Caco-2 (cell line): ENCODE measurements at regions of chr6 and their contacts with region 1.

Region 1: DNA sequence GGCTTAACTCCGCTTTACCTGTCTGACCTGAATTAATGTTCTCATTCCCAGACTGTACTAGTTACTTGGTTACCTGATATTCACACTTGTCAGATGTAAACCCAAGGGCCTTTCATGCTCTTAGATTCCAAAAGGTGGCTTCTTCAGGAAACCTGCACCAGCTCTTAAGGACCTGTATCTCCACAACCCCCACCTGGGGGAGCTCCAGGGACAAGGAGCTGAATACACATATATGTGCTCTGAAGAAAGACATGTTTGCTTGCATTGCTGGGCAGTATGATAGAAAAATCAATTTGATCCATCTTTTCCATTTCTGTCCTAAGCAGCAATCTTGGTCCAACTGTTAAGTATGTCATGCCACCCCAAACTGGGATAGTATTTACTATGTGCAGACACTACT is 64.8 kb upstream of the POU3F2 start:
- DNase-seq: peak; percentile 52 to 66
- H3K4me3 ChIP-seq: no peak overlapping the region
- H3K4me3 Mint-ChIP-seq: no peak overlapping the region
- H3K27ac Mint-ChIP-seq: no peak overlapping the region
- H3K4me1 ChIP-seq: no peaks in the 10 kb centered on the region
- H3K4me1 Mint-ChIP-seq: no peaks in the 10 kb centered on the region
- H3K27me3 ChIP-seq: no peaks in the 10 kb centered on the region
- H3K27me3 Mint-ChIP-seq: peaks cover 13% of the 10 kb centered on the region
- CTCF ChIP-seq: peak; percentile 27 to 68

Region 2: DNA sequence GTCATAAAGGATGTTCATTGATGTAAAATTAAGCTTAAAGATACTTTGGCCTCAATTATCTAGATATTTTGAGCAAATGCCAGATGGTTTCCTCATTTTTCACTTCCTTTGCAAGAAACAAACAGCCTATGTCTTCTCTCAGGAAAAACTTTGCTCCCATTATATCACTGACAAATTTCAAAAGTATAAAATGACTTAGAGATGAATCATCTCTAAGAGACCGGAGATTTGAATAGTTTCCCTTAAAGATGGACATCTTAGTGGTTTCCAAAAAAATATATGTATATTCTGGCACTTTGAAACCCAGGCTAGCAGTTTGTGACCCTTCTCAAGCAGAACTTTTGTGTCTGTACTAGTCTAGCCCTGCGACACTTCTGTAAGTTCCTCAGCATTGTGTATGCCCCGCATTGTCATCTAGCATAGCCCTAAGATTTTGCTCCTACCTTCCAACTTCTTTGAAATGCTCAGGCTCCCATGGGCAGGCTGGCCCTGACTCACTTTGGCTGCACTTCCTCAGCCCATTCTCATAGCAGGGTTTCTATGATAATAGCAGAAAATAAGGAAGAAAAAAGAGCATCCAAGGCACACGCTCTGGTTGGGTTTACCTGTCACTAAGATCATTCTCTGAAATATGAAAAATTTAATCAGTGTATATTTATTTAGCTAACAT is 39.1 kb after region 1 on chr6:
- CTCF ChIA-PET with region 1: no interaction called
- POLR2A ChIA-PET with region 1: no interaction called
- intact Hi-C with region 1: no loop called
- DNase-seq: no peak
- H3K4me3 ChIP-seq: no peak overlapping the region
- H3K4me3 Mint-ChIP-seq: no peak overlapping the region
- H3K27ac Mint-ChIP-seq: no peak overlapping the region
- H3K4me1 ChIP-seq: no peaks in the 10 kb centered on the region
- H3K4me1 Mint-ChIP-seq: no peaks in the 10 kb centered on the region
- H3K27me3 ChIP-seq: no peaks in the 10 kb centered on the region
- H3K27me3 Mint-ChIP-seq: peaks cover 4% of the 10 kb centered on the region
- CTCF ChIP-seq: no peak

Region 3: GRCh38 chr6:98839781-98840361 is 70.3 kb after region 1 on chr6:
- CTCF ChIA-PET with region 1: interaction called, 12 read pairs
- POLR2A ChIA-PET with region 1: no interaction called
- intact Hi-C with region 1: loop called (anchors 1 kb)
- DNase-seq: no peak
- H3K4me3 ChIP-seq: no peak overlapping the region
- H3K4me3 Mint-ChIP-seq: no peak overlapping the region
- H3K27ac Mint-ChIP-seq: no peak overlapping the region
- H3K4me1 ChIP-seq: peaks cover 12% of the 10 kb centered on the region; the same call in 1 of the 2 replicates
- H3K4me1 Mint-ChIP-seq: no peaks in the 10 kb centered on the region
- H3K27me3 ChIP-seq: peaks cover 4% of the 10 kb centered on the region
- H3K27me3 Mint-ChIP-seq: peaks cover 39% of the 10 kb centered on the region
- CTCF ChIP-seq: peak; percentile 27 to 57

Region 4: DNA sequence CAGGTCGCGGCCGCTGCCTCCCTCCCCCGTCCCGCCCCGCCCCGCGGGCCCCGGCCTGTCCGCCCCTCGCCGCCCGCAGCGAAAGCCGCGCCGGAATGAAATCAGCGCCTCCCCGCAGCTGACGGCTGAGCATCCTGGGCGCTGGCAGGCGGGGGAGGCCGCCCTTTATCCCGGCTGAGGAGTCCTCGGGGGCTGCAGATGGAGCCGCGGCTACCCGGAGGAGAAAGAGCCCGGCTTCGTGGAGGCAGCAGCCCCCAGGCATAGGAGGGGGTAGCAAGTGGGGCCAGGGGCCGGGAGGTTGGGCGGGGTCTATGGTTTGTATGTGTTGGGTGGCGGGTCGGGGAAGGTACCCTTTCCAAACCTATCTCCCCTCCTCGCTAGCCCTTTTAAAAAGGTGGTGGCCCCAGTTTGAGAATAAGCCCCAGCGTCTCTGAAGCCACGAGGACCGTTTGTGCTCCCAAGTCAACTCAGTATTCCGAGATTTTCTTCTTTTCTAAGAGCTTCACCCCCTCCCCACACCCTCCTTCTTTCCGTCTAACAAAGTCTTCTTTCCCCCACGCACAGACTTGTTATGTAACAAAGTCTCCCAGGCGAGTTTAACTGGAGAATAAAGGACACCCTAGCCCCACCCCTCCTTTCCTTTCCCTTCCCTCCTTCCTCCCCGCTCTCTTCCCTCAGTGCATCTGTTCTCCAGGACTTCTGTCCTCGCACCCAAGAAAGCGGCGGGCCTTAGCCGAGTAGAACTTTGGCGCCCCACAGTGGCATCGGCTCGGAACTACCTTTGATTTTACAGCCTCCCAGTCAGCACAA is 75.9 kb after region 1 on chr6:
- CTCF ChIA-PET with region 1: interaction called, 10 read pairs
- POLR2A ChIA-PET with region 1: no interaction called
- intact Hi-C with region 1: loop called (anchors 1 kb)
- DNase-seq: peak; percentile 66 to 79
- H3K4me3 ChIP-seq: no peak overlapping the region
- H3K4me3 Mint-ChIP-seq: peak overlapping the region; percentile 56
- H3K27ac Mint-ChIP-seq: no peak overlapping the region
- H3K4me1 ChIP-seq: 0 out of 2 replicates have a peak, but pooled peaks cover 4% of the 10 kb centered on the region
- H3K4me1 Mint-ChIP-seq: no peaks in the 10 kb centered on the region
- H3K27me3 ChIP-seq: no peaks in the 10 kb centered on the region; the same call in 1 of the 2 replicates
- H3K27me3 Mint-ChIP-seq: peaks cover 34% of the 10 kb centered on the region
- CTCF ChIP-seq: peak; percentile 85 to 88

Region 5: DNA sequence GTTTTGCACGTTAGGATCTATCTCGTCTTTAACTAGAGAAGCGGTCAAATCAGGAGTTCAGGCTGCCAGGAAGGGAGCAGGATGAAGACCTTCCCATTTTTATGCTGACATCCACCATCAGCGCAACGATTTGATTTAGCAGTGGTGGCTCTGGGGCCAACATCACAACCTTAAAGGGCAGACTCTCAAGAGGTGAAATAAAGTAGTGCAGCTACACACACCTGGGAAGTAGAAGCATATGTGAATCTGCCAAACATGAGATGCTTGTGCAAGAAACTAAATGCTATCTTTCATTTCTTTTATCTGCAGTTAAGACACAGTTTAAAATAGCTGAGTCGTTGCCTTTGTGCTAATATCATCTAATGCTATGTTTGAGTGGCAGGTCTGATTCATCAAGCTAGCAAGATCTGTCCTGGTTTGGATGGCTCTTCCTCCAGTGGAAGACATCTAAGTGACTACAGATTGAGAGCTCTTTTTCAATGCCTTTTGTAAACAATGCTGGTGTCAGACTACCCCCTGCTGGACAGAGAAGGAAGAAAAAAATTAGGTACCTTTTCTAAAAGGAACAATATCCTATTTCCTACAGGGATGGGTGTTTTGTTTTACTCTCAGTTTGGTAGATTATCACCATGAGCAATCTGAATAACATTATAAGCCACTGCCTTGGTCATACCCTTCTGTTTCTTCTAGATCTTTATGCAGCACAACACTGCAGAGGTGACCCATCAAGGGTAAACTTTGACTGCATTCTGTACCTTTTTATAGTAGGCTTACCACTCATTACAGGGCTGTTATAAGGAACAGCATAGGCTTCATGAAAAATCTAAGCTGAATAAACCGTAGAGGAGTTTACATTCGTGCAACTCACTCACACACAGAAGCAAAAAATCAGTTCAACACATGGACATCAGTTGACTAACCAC is 349.8 kb after region 1 on chr6:
- CTCF ChIA-PET with region 1: interaction called, 13 read pairs
- POLR2A ChIA-PET with region 1: no interaction called
- intact Hi-C with region 1: loop called (anchors 1 kb)
- DNase-seq: peak in 1 of 2 experiments; percentile 42
- H3K4me3 ChIP-seq: no peak overlapping the region
- H3K4me3 Mint-ChIP-seq: no peak overlapping the region
- H3K27ac Mint-ChIP-seq: no peak overlapping the region
- H3K4me1 ChIP-seq: no peaks in the 10 kb centered on the region
- H3K4me1 Mint-ChIP-seq: no peaks in the 10 kb centered on the region
- H3K27me3 ChIP-seq: no peaks in the 10 kb centered on the region
- H3K27me3 Mint-ChIP-seq: peaks cover 15% of the 10 kb centered on the region
- CTCF ChIP-seq: peak; percentile 51 to 66